CD8-positive, alpha-beta T cell (primary cell): ENCODE measurements at regions of chr13 and their contacts with region 1.

Region 1: DNA sequence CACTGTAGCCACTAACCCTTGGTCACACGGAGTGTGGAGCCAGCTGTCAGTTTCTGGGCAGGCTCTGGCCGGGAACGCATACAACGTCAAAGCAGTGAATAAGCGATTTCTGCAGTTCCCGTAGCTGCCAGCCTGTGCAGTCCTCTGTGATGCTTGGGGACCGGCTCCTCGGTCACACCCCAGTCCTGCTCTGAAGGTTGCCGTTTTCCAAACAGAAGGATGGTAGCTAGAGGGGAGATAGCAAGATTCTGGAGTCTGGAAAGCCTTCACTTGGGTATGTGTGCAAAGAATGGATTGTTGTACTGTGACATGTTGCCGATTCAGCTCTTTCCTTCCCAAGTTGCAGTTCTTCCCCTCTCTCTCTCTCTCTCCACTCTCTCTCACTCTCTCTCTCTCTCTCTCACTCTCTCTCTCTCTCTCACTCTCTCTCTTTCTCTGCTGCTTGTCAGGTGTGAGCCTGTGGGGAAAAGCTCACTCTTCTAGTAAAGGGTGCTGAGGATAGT is 38.7 kb upstream of the C1QTNF9 start:
- DNase-seq: peak in 8 of 9 experiments; percentile 40 to 86 (median 68)
- ATAC-seq: peak; percentile 32
- H3K4me3 ChIP-seq: peak overlapping the region; percentile 32 to 54
- H3K4me3 Mint-ChIP-seq: peak overlapping the region; percentile 85
- H3K27ac ChIP-seq: peak overlapping the region; percentile 81 to 94
- H3K27ac Mint-ChIP-seq: peak overlapping the region; percentile 99
- H3K4me1 ChIP-seq: peaks cover 91% of the 10 kb centered on the region
- H3K4me1 Mint-ChIP-seq: peaks cover 94% of the 10 kb centered on the region
- H3K27me3 ChIP-seq: no peaks in the 10 kb centered on the region
- H3K27me3 Mint-ChIP-seq: no peaks in the 10 kb centered on the region
- CTCF ChIP-seq: no peak

Region 2: DNA sequence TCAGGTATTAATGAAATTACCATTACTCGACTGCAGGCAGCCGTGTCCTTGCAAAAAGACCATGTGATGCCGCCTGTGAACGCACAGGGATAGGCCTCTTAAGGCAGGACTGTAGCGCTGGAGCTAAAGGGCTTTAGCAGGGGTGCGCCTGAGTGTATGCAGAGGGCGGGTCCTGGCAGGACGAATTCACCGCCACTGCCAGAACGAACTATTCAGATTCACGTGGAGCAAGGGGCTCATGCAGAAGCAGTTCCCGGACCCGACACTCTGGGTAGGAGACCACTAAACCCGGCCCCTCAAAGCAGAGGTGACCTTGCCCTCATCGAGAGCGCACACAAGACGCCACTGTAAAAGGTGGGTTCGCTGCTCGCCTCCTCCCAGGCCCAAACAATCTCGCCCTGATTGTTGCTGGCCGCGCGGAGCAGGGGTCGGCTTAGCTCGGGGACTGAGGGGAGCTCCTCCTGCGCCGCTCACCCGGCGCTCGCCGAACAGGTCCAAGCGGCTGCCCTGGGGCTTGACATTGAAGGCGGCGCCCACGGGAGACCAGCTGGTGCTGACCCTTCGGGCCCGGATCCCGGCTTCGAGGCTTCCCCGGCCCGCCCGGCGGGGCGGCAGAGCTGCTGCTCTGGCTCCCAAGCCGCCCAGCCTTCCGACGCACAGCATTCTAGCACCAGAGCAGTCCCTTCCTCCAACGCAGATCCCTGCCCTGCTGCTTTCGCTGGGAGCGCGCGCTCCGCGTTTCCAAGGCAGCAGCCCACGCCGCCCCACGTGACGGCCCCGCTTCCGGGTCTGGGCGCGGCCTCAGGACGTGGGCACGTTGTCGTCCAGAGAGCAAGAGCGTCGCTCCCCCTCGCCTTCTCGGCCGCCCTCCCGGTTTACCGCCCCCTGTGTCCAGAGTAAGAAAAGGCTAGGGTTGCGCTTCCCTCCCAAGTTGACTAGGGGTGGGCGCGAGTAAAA is 381.8 kb before region 1 on chr13 and contains the start of gene MIPEP:
- CTCF ChIA-PET with region 1: no interaction called
- POLR2A ChIA-PET with region 1: no interaction called
- intact Hi-C with region 1: loop called in 1 of 2 experiments (anchors 2 kb)
- DNase-seq: peak; percentile 73 to 95 (median 87)
- ATAC-seq: peak; percentile 93
- H3K4me3 ChIP-seq: peak within 1 kb of the TSS; percentile 79
- H3K4me3 Mint-ChIP-seq: peak within 1 kb of the TSS; percentile 90
- H3K27ac ChIP-seq: peak within 1 kb of the TSS; percentile 61 to 71
- H3K27ac Mint-ChIP-seq: peak within 1 kb of the TSS; percentile 88
- H3K4me1 ChIP-seq: peaks cover 7% of the 10 kb centered on the region
- H3K4me1 Mint-ChIP-seq: peaks cover 23% of the 10 kb centered on the region
- H3K27me3 ChIP-seq: no peaks in the 10 kb centered on the region
- H3K27me3 Mint-ChIP-seq: peaks cover 3% of the 10 kb centered on the region
- CTCF ChIP-seq: peak; percentile 65
- total RNA-seq, gene MIPEP: 3.0 to 3.8 TPM

Region 3: GRCh38 chr13:24119626-24120508 is 150.8 kb before region 1 on chr13:
- CTCF ChIA-PET with region 1: no interaction called
- POLR2A ChIA-PET with region 1: no interaction called
- intact Hi-C with region 1: no loop called
- DNase-seq: no peak
- ATAC-seq: no peak
- H3K4me3 ChIP-seq: no peak overlapping the region
- H3K4me3 Mint-ChIP-seq: no peak overlapping the region
- H3K27ac ChIP-seq: no peak overlapping the region
- H3K27ac Mint-ChIP-seq: no peak overlapping the region
- H3K4me1 ChIP-seq: no peaks in the 10 kb centered on the region
- H3K4me1 Mint-ChIP-seq: peaks cover 10% of the 10 kb centered on the region
- H3K27me3 ChIP-seq: no peaks in the 10 kb centered on the region
- H3K27me3 Mint-ChIP-seq: no peaks in the 10 kb centered on the region
- CTCF ChIP-seq: no peak

Region 4: DNA sequence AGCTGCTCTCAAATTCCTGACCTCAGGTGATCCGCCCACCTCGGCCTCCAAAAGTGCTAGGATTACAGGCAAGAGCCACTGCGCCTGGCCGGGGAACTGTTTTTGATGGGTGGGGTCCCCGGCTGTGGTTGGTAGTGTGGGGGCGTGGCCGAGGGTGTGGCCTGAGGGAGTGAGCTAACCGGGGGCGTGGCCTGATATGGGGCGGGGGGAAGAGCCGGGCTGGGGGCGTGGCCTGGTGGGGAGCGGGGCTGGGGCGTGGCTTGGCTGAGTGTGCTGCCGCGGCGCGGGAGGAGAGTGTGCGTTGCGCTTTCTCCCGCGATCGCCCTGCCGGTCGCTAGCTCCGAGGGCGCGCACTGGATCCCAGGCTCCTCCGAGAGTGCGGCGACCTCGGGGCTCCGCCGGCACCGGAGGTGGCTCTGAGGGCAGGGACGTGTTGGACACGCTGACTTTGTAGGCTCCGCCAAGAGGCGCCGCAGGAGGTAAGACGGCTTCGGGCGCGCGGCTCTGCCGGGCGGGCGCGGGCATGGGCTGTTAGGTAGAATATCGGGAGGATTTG is 110.2 kb before region 1 on chr13 and contains the start of gene SPATA13:
- CTCF ChIA-PET with region 1: no interaction called
- POLR2A ChIA-PET with region 1: no interaction called
- intact Hi-C with region 1: loop called in 1 of 2 experiments (anchors 5 kb)
- DNase-seq: peak; percentile 87 to 97 (median 94)
- ATAC-seq: peak; percentile 96
- H3K4me3 ChIP-seq: peak within 1 kb of the TSS; percentile 87 to 89
- H3K4me3 Mint-ChIP-seq: peak within 1 kb of the TSS; percentile 87
- H3K27ac ChIP-seq: peak within 1 kb of the TSS; percentile 29 to 56
- H3K27ac Mint-ChIP-seq: peak within 1 kb of the TSS; percentile 72
- H3K4me1 ChIP-seq: peaks cover 16% of the 10 kb centered on the region
- H3K4me1 Mint-ChIP-seq: peaks cover 26% of the 10 kb centered on the region
- H3K27me3 ChIP-seq: no peaks in the 10 kb centered on the region
- H3K27me3 Mint-ChIP-seq: no peaks in the 10 kb centered on the region
- CTCF ChIP-seq: no peak
- total RNA-seq, gene SPATA13: 102 to 106 TPM

Region 5: GRCh38 chr13:24254146-24254841 is 16.4 kb before region 1 on chr13:
- CTCF ChIA-PET with region 1: interaction called, 49 read pairs
- POLR2A ChIA-PET with region 1: interaction called, 224 read pairs
- intact Hi-C with region 1: loop called (anchors 1 kb)
- DNase-seq: peak in 8 of 9 experiments; percentile 44 to 91 (median 69)
- ATAC-seq: peak; percentile 58
- H3K4me3 ChIP-seq: peak overlapping the region; percentile 73 to 94
- H3K4me3 Mint-ChIP-seq: peak overlapping the region; percentile 91
- H3K27ac ChIP-seq: peak overlapping the region; percentile 77 to 84
- H3K27ac Mint-ChIP-seq: peak overlapping the region; percentile 98
- H3K4me1 ChIP-seq: peaks cover 85% of the 10 kb centered on the region
- H3K4me1 Mint-ChIP-seq: peaks cover 94% of the 10 kb centered on the region
- H3K27me3 ChIP-seq: no peaks in the 10 kb centered on the region
- H3K27me3 Mint-ChIP-seq: no peaks in the 10 kb centered on the region
- CTCF ChIP-seq: no peak

Region 6: GRCh38 chr13:24512197-24512907 is 241.7 kb after region 1 on chr13 and contains the start of gene PARP4:
- CTCF ChIA-PET with region 1: no interaction called
- POLR2A ChIA-PET with region 1: no interaction called
- intact Hi-C with region 1: loop called in 1 of 2 experiments (anchors 5 kb)
- DNase-seq: peak in 8 of 9 experiments; percentile 53 to 84 (median 66)
- ATAC-seq: peak; percentile 71
- H3K4me3 ChIP-seq: peak within 1 kb of the TSS; percentile 70 to 98
- H3K4me3 Mint-ChIP-seq: peak within 1 kb of the TSS; percentile 87
- H3K27ac ChIP-seq: peak within 1 kb of the TSS; percentile 66 to 83
- H3K27ac Mint-ChIP-seq: peak within 1 kb of the TSS; percentile 92
- H3K4me1 ChIP-seq: peaks cover 12% of the 10 kb centered on the region
- H3K4me1 Mint-ChIP-seq: peaks cover 31% of the 10 kb centered on the region
- H3K27me3 ChIP-seq: no peaks in the 10 kb centered on the region
- H3K27me3 Mint-ChIP-seq: no peaks in the 10 kb centered on the region
- CTCF ChIP-seq: no peak
- total RNA-seq, gene PARP4: 20.1 to 21.8 TPM

Region 7: GRCh38 chr13:25286969-25287961 is 1016.6 kb after region 1 on chr13 and contains the start of gene MTMR6:
- CTCF ChIA-PET with region 1: no interaction called
- POLR2A ChIA-PET with region 1: no interaction called
- intact Hi-C with region 1: loop called in 1 of 2 experiments (anchors 10 kb)
- DNase-seq: peak; percentile 90 to 98 (median 94)
- ATAC-seq: peak; percentile 81
- H3K4me3 ChIP-seq: peak within 1 kb of the TSS; percentile 83 to 95
- H3K4me3 Mint-ChIP-seq: peak within 1 kb of the TSS; percentile 98
- H3K27ac ChIP-seq: peak within 1 kb of the TSS; percentile 94 to 97
- H3K27ac Mint-ChIP-seq: peak within 1 kb of the TSS; percentile 99
- H3K4me1 ChIP-seq: peaks cover 23% of the 10 kb centered on the region
- H3K4me1 Mint-ChIP-seq: peaks cover 41% of the 10 kb centered on the region
- H3K27me3 ChIP-seq: peaks cover 0 to 2% of the 10 kb centered on the region in 2 experiments
- H3K27me3 Mint-ChIP-seq: peaks cover 10% of the 10 kb centered on the region
- CTCF ChIP-seq: peak; percentile 99
- total RNA-seq, gene MTMR6: 41.9 to 44.4 TPM